Activated CD8-positive, alpha-beta T cell treated with anti-CD3 and anti-CD28 coated beads, Interleukin-2, amount 10 ng/mL, durations not matched to agents 7 days and 5 days (primary cell): ENCODE measurements at regions of chr17 and their contacts with region 1.

Region 1: GRCh38 chr17:31388770-31389661 is 2.5 kb upstream of the RAB11FIP4 start:
- DNase-seq: peak; percentile 54
- ATAC-seq: peak; percentile 43
- H3K4me3 Mint-ChIP-seq: no peak overlapping the region
- H3K27ac Mint-ChIP-seq: no peak overlapping the region
- H3K4me1 Mint-ChIP-seq: peaks cover 9% of the 10 kb centered on the region
- H3K27me3 Mint-ChIP-seq: peaks cover 42% of the 10 kb centered on the region

Region 2: DNA sequence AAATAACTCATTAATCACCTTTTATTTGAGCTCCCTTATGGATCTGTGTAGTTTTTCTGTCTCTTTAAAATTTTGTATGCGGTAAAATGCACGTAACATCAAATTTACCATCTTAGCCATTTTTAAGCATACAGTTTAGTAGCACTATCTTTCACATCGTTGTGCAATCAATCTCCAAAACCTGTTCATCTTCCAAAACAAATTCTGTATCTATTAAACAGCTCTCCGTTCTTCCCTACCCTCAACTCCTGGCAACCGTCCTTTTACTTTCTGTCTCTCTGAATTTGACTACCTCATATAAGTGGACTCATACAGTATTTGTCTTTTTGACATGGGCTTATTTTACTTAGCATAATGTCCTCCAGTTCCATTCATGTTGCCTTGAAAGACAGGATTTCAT is 193.7 kb before region 1 on chr17:
- CTCF ChIA-PET with region 1: no interaction called
- POLR2A ChIA-PET with region 1: no interaction called
- DNase-seq: no peak
- ATAC-seq: no peak
- H3K4me3 Mint-ChIP-seq: no peak overlapping the region
- H3K27ac Mint-ChIP-seq: no peak overlapping the region
- H3K4me1 Mint-ChIP-seq: no peaks in the 10 kb centered on the region
- H3K27me3 Mint-ChIP-seq: no peaks in the 10 kb centered on the region

Region 3: GRCh38 chr17:31524926-31525800 is 136.1 kb after region 1 on chr17:
- CTCF ChIA-PET with region 1: interaction called, 23 read pairs
- POLR2A ChIA-PET with region 1: no interaction called
- DNase-seq: peak; percentile 88
- ATAC-seq: peak; percentile 84
- H3K4me3 Mint-ChIP-seq: no peak overlapping the region
- H3K27ac Mint-ChIP-seq: no peak overlapping the region
- H3K4me1 Mint-ChIP-seq: no peaks in the 10 kb centered on the region
- H3K27me3 Mint-ChIP-seq: no peaks in the 10 kb centered on the region

Region 4: DNA sequence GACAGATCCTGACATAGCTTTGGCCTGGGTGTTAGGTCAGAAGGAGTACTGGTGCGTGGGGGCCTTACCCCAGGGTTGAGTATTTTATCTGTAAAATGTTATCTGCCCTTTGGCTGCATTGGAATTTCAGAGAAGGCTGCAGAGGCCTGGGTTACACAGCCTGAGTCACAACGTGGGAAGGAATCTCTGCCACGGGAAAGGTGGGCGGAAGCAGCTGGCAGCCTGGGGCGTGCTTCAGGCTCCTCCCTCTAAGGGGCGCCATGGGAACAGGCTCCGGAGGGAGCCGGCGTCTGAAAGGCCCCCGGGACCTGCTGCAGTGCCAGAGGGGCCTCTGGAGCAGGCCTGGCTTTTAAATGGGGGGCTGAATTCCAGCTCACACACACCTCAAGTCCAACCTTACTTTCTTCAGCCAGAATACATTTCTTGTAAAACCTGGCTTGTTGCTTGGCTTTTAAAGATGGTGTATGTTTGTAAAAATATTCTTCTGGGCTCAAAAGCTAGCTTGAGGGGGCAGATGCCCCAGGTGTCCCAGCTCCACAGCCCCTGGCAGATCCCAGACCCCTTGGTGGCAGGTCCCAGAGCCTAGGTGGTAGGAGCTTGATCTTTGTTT is 144.6 kb after region 1 on chr17:
- CTCF ChIA-PET with region 1: interaction called, 13 read pairs
- POLR2A ChIA-PET with region 1: no interaction called
- DNase-seq: no peak
- ATAC-seq: peak; percentile 20
- H3K4me3 Mint-ChIP-seq: no peak overlapping the region
- H3K27ac Mint-ChIP-seq: no peak overlapping the region
- H3K4me1 Mint-ChIP-seq: peaks cover 17% of the 10 kb centered on the region
- H3K27me3 Mint-ChIP-seq: no peaks in the 10 kb centered on the region